ENCODE measurements at regions of chr2 and their contacts with region 1.

Region 1: DNA sequence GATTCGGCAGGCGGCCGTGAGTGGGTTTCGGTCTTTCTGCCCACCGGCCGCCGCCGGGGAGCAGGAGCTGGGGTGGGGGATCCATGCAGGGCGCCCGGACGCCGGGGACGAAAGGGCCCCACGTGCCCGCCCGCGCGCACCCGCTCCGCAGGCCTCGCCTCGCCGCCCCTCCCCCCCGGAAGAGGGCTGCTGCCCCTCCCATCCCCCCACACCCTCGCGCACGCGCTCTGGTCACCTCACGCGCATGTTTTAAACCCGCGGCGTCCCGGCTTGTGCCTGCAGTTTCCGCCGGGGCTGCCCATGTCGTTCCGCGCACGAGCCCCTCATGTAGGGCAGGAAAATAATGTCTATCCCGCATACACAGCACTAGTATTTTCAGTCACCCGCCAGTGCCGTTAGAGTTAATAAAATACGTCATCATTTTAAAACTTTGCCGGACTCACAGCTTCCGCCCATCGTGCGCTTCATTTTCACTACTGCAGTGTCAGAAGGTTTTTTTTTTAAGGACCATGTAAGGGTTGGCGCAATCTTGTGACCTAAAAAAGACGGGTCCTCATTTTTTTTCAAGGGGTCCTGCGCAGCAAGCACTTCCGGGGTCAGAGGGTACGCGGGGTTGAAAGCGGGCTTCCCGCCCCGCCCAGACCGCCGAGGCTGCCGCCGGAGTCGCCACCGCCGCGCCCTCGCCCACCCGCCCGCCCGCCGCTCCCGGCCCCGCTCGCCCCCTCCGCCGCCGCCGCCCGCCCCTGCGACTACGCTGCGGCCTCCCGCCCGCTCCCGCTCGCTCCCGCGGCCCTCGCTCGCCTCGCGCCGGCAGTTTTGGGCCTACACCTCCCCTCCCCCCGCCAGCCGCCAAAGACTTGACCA is at the start of gene PCBP1:
- DNase-seq: peak; percentile 96 to 99 (median 99)
- ATAC-seq: peak; percentile 88 to 89
- H3K4me3 ChIP-seq: peak within 1 kb of the TSS; percentile 67
- H3K27ac ChIP-seq: peak within 1 kb of the TSS; percentile 99
- H3K4me1 ChIP-seq: peaks cover 6% of the 10 kb centered on the region
- H3K27me3 ChIP-seq: no peaks in the 10 kb centered on the region
- total RNA-seq, gene PCBP1: 233 to 259 (median 239) TPM

Region 2: DNA sequence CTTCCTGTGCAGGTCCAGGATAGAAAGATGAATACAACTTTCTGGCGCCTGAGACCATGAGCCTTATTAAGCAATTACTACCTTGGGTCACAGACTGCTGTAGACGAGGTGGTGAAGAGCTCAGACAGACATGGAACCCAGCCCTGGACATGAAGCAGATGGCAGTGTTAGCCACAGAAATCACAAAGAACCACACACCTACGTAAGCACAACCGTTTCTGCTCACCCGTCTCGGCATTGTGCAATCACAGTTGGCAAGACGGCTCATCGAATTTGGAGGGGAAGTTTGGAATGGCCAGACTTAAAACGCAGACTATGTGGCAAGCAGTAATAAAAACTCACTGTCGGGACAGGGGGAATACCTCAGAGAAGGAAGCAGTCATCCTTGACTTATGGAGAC is 101.4 kb before region 1 on chr2:
- intact Hi-C with region 1: no loop called
- DNase-seq: peak; percentile 40 to 71 (median 65)
- ATAC-seq: no peak
- H3K4me3 ChIP-seq: no peak overlapping the region
- H3K27ac ChIP-seq: no peak overlapping the region
- H3K4me1 ChIP-seq: no peaks in the 10 kb centered on the region
- H3K27me3 ChIP-seq: no peaks in the 10 kb centered on the region

Region 3: GRCh38 chr2:70124983-70125480 is 38.0 kb after region 1 on chr2:
- intact Hi-C with region 1: loop called in 1 of 4 experiments (anchors 5 kb)
- DNase-seq: peak; percentile 71 to 89 (median 89)
- ATAC-seq: peak; percentile 66 to 72
- H3K4me3 ChIP-seq: peak overlapping the region; percentile 72
- H3K27ac ChIP-seq: peak overlapping the region; percentile 98
- H3K4me1 ChIP-seq: no peaks in the 10 kb centered on the region
- H3K27me3 ChIP-seq: no peaks in the 10 kb centered on the region

Region 4: DNA sequence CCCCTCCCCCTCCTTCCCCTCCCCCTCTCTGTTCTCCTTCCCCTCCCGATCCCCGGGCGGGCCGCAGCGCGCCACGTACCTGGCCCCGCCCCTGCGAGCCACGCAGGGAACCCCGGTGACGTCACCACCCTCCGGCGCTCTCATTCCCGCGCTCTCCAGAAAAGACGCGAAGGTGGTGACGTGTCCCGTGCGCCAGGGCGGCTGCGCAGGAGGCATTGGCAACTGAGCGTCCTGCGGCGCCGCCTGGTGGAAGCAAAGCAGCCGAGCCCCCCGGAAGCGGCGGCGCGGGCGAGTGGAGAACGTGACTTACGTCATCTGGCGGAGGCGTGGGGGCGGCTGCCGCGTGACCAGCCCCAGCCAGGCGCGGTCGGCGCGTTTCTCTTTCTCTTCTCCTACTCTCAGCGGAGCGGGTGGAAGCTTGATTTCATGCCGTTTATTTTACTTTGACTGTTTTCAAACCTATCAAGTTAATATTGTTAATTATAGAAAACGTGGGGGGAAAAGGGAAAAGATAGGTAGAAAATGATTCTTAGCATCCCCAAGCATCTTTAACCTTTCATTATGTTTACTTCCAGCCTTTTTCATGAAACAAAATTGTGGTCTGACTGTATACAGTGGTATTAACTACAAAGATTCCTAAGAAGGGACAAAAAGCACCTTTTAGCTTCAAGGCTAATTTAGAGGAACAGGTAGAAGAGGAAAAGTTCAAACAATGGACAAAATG is 55.7 kb after region 1 on chr2:
- intact Hi-C with region 1: loop called (anchors 2 to 5 kb)
- DNase-seq: peak; percentile 100
- ATAC-seq: peak; percentile 90 to 93
- H3K4me3 ChIP-seq: peak overlapping the region; percentile 33
- H3K27ac ChIP-seq: peak overlapping the region; percentile 36
- H3K4me1 ChIP-seq: peaks cover 3% of the 10 kb centered on the region
- H3K27me3 ChIP-seq: no peaks in the 10 kb centered on the region